AG04450 (cell line): ENCODE measurements at regions of chr15 and their contacts with region 1.

Region 1: DNA sequence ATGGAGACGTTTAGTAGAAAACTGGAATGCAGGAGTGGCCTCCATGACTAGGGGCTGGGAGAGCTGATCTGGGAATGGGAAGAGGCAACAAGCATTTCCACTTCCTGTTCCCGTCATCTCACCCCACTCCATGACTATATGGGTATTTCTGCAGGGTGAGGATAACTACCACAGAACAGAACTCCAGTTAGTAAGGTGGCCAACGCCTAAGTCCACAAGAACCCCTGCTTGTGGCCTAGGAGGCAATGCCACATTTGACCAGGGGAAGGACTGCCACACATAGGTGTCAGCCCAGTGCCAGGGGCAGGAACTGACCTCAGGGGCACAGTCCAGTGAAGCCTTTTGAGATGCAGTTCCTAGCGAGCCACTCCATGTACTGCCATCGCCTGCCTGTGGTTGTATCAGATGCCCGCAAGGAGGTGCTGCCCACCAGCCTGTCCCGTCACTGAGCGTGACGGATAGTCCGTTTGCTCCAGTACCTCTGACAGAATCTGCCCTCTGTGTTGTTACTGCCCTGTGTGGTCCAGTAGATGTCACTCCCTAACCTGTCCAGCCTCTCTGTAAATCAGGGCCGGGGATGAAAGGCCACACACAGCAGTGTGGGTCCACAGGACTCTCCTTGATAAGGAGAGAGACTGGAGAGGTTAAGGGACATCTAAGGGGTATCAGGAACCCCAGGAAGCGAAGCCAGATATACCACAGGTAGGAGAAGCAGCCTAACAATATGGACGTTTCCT is 3.5 kb upstream of the MTFMT start:
- DNase-seq: no peak
- H3K4me3 ChIP-seq: no peak overlapping the region
- H3K27ac ChIP-seq: no peak overlapping the region
- H3K27me3 ChIP-seq: no peaks in the 10 kb centered on the region
- CTCF ChIP-seq: peak; percentile 71

Region 2: DNA sequence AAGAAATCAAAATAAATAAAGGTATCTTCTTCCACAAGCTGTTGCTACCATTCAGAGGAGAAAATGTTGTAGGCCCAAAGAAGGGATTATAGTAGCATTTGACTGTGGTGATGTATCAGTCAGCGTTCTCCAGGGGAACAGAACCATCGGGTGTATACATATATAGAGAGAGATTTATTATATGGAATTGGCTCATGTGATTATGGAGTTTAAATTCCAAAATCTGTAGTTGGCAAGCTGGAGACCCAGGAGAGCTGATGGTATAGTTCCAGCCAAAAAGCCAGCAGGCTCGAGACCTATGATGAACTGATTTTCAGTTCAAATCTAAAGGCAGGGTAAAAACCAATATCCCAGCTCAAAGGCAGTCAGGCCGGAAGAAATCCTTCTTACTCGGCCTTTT is 35.9 kb before region 1 on chr15:
- CTCF ChIA-PET with region 1: no interaction called
- POLR2A ChIA-PET with region 1: no interaction called
- DNase-seq: no peak
- H3K4me3 ChIP-seq: no peak overlapping the region
- H3K27ac ChIP-seq: no peak overlapping the region
- H3K27me3 ChIP-seq: peaks cover 3% of the 10 kb centered on the region
- CTCF ChIP-seq: no peak

Region 3: GRCh38 chr15:65008983-65009382 is 24.0 kb before region 1 on chr15:
- CTCF ChIA-PET with region 1: no interaction called
- POLR2A ChIA-PET with region 1: no interaction called
- DNase-seq: no peak
- H3K4me3 ChIP-seq: no peak overlapping the region
- H3K27ac ChIP-seq: no peak overlapping the region
- H3K27me3 ChIP-seq: no peaks in the 10 kb centered on the region
- CTCF ChIP-seq: peak; percentile 33

Region 4: DNA sequence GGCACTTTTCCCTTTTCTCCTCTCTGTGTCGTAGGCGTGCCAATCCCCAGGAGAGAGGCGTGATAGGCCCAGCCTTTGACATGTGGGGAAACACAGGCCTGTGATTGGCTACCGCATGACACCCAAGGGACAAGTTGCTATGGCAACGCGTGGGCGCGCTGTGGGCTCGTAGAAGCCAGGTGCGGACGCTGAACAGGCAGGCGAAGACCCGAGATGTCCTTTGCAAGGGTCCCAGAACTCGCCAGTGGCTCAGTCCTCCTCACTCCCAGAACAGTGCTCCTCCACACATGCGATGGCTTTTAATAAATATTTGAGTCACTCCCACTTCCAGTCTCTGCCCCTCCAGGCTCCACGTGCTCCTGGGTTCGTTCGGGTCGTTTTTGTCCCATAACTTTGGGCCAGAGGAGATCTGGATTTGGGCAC is 16.5 kb after region 1 on chr15:
- CTCF ChIA-PET with region 1: interaction called, 36 read pairs
- POLR2A ChIA-PET with region 1: interaction called, 3 read pairs
- DNase-seq: no peak
- H3K4me3 ChIP-seq: peak overlapping the region; percentile 25
- H3K27ac ChIP-seq: no peak overlapping the region
- H3K27me3 ChIP-seq: no peaks in the 10 kb centered on the region
- CTCF ChIP-seq: no peak

Region 5: DNA sequence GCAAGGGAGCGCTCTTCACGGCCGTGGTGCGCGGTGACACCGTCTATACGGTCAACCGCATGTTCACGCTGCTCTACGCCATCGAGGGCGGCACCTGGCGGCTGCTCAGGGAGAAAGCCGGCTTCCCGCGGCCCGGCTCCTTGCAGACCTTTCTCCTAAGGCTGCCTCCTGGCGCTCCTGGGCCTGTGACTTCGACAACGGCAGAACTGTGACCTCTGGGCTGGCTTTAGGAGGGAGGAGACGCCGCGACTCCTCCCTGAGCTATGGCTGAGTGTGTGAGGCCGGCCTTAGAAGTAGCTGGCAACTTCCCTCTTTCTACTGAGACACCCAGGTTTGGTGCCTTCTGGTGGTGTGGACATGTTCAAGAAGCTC is 45.0 kb after region 1 on chr15:
- CTCF ChIA-PET with region 1: interaction called, 45 read pairs
- POLR2A ChIA-PET with region 1: interaction called, 4 read pairs
- DNase-seq: no peak
- H3K4me3 ChIP-seq: no peak overlapping the region
- H3K27ac ChIP-seq: no peak overlapping the region
- H3K27me3 ChIP-seq: peaks cover 23% of the 10 kb centered on the region
- CTCF ChIP-seq: peak; percentile 56

Region 6: GRCh38 chr15:65095011-65095746 is 62.2 kb after region 1 on chr15:
- CTCF ChIA-PET with region 1: interaction called, 78 read pairs
- POLR2A ChIA-PET with region 1: no interaction called
- DNase-seq: no peak
- H3K4me3 ChIP-seq: no peak overlapping the region
- H3K27ac ChIP-seq: no peak overlapping the region
- H3K27me3 ChIP-seq: no peaks in the 10 kb centered on the region
- CTCF ChIP-seq: no peak

Region 7: DNA sequence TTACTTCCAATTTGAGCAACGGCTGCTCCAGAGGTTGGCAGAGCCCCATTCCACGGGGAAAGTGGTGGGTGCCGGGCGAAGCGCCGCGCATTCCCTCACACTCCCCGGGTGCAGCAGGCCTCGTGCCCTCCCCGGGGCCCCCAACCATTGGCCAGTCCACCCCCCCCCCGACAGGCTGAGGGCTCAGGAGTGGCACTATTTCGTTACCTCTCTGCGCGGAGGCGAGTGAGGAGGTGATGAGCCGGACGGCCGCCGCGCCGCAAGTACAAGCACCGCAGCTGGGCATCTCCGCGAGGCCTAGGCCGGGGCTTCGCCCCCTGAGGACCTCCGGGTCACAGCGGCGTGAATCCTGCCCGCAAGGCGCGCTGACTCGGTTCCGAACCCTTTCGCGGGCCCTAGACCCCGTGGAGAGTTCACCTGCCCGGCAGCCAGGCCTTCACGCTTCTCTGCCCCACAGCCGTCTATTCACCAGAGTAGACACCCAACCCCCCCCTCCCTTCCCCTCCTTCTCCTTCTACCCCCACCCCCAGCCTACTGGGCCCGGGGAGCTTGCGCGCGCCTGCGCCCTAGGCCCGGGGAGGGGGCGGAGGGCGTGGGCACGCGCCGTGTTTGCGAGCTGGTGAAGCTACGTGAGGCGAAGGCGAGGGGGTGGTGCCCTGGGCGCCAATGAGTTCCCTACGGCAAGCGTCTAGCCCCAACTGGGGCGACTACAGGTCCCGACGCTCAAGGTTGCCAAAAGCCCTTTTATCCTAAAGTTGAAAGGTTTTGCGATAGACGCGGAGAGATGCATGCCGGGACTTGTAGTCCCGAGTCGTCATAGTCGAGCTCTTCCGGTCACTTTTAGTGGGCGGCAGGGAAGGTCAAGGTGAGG is 152.1 kb after region 1 on chr15 and contains the start of gene CLPX:
- CTCF ChIA-PET with region 1: interaction called, 13 read pairs
- POLR2A ChIA-PET with region 1: interaction called, 5 read pairs
- DNase-seq: peak; percentile 78
- H3K4me3 ChIP-seq: peak within 1 kb of the TSS; percentile 92
- H3K27ac ChIP-seq: peak within 1 kb of the TSS; percentile 84
- H3K27me3 ChIP-seq: no peaks in the 10 kb centered on the region
- CTCF ChIP-seq: no peak
- polyA plus RNA-seq, gene CLPX: 39.2 and 58.3 TPM in 2 replicates